Endothelial cell of umbilical vein (primary cell): ENCODE measurements at regions of chr2 and their contacts with region 1.

Region 1: GRCh38 chr2:46315103-46315890 is 18.1 kb downstream of the EPAS1 start:
- DNase-seq: peak; percentile 97
- H3K4me3 ChIP-seq: no peak overlapping the region
- H3K27ac ChIP-seq: peak overlapping the region; percentile 80
- H3K4me1 ChIP-seq: peaks cover 44% of the 10 kb centered on the region
- H3K27me3 ChIP-seq: no peaks in the 10 kb centered on the region
- CTCF ChIP-seq: no peak
- POLR2A ChIP-seq: peak; percentile 69

Region 2: DNA sequence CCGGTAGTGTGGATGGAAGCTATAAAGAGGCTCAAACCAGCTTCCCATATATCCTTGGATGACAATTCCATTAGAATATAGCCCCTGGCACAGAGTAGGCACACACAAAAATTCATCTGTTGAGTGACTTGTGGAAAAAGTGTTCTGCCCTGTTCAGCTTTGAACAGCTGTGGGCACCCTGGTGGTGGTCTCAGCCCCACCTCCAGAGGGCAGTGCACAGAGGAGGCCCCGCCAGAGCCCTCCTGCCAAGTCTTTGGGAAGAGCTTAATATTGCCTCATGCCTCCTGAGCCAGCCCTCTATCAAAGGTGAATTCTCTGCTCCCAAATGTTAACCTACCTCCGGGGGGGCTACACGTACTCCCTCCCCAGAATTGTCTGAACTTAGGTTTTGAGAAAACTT is 12.3 kb after region 1 on chr2:
- CTCF ChIA-PET with region 1: interaction called, 8 read pairs
- POLR2A ChIA-PET with region 1: no interaction called
- dilution Hi-C with region 1: no loop called
- intact Hi-C with region 1: loop called (anchors 1 kb)
- DNase-seq: no peak
- H3K4me3 ChIP-seq: no peak overlapping the region
- H3K27ac ChIP-seq: no peak overlapping the region
- H3K4me1 ChIP-seq: peaks cover 48% of the 10 kb centered on the region
- H3K27me3 ChIP-seq: no peaks in the 10 kb centered on the region
- CTCF ChIP-seq: peak in 1 of 2 donors; percentile 13
- POLR2A ChIP-seq: no peak

Region 3: GRCh38 chr2:46335391-46336282 is 20.3 kb after region 1 on chr2:
- CTCF ChIA-PET with region 1: interaction called, 4 read pairs
- POLR2A ChIA-PET with region 1: no interaction called
- dilution Hi-C with region 1: no loop called
- intact Hi-C with region 1: loop called (anchors 1 kb)
- DNase-seq: peak; percentile 88
- H3K4me3 ChIP-seq: peak overlapping the region in 1 of 3 experiments; percentile 29
- H3K27ac ChIP-seq: peak overlapping the region; percentile 87
- H3K4me1 ChIP-seq: peaks cover 37% of the 10 kb centered on the region
- H3K27me3 ChIP-seq: no peaks in the 10 kb centered on the region
- CTCF ChIP-seq: no peak
- POLR2A ChIP-seq: peak; percentile 9